ENCODE measurements at regions of chr16 and their contacts with region 1.

Region 1: GRCh38 chr16:10579965-10580882 is at the start of gene EMP2:
- DNase-seq: peak; percentile 75 to 90
- ATAC-seq: peak; percentile 89 to 97
- H3K4me3 ChIP-seq: peak within 1 kb of the TSS; percentile 89
- H3K27ac ChIP-seq: peak within 1 kb of the TSS; percentile 89 to 95
- H3K4me1 ChIP-seq: 0 out of 3 replicates have a peak, but pooled peaks cover 8% of the 10 kb centered on the region
- CTCF ChIP-seq: peak; percentile 67
- EP300 ChIP-seq: no peak
- POLR2A ChIP-seq: peak; percentile 58
- RAD21 ChIP-seq: peak; percentile 34 to 49; a peak in 4 of 5 replicates
- polyA plus RNA-seq, gene EMP2: 21.4 and 26.5 TPM in 2 replicates

Region 2: DNA sequence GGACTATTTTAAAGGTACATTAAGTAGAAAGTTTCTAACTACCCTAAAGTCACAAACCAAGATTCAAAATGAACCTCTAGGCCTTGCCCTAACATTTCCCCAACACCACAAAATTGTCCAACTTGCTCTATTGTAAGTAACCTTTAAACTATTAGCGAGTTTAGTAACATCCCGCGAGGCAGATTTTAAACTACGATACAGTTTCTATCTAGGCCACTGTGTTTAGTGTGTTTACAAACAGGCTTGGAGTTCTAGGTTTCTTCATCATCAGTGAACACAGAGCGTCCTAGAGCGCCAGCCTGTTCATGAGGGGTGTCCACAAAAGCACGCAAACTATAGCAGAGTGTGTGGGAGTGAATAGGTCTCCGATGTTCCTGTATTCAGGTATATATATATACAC is 51.6 kb before region 1 on chr16:
- CTCF ChIA-PET with region 1: no interaction called
- POLR2A ChIA-PET with region 1: no interaction called
- DNase-seq: no peak
- ATAC-seq: no peak
- H3K4me3 ChIP-seq: no peak overlapping the region
- H3K27ac ChIP-seq: no peak overlapping the region
- H3K4me1 ChIP-seq: 0 out of 3 replicates have a peak, but pooled peaks cover 1% of the 10 kb centered on the region
- CTCF ChIP-seq: no peak
- EP300 ChIP-seq: no peak
- POLR2A ChIP-seq: no peak
- RAD21 ChIP-seq: no peak

Region 3: GRCh38 chr16:10566589-10566988 is 13.6 kb before region 1 on chr16:
- CTCF ChIA-PET with region 1: interaction called, 15 read pairs
- POLR2A ChIA-PET with region 1: no interaction called
- DNase-seq: no peak
- ATAC-seq: peak in 1 of 2 experiments; percentile 40; a peak in 1 of 6 replicates
- H3K4me3 ChIP-seq: no peak overlapping the region
- H3K27ac ChIP-seq: no peak overlapping the region
- H3K4me1 ChIP-seq: no peaks in the 10 kb centered on the region
- CTCF ChIP-seq: no peak
- EP300 ChIP-seq: no peak
- POLR2A ChIP-seq: no peak
- RAD21 ChIP-seq: 0 out of 5 replicates have a peak, but pooled peaks of 1 of the 2 experiments have one; percentile 8

Region 4: GRCh38 chr16:10668322-10669045 is 88.3 kb after region 1 on chr16:
- CTCF ChIA-PET with region 1: no interaction called
- POLR2A ChIA-PET with region 1: no interaction called
- DNase-seq: peak; percentile 45 to 54
- ATAC-seq: peak; percentile 90 to 97
- H3K4me3 ChIP-seq: no peak overlapping the region
- H3K27ac ChIP-seq: no peak overlapping the region
- H3K4me1 ChIP-seq: no peaks in the 10 kb centered on the region
- CTCF ChIP-seq: no peak; the same call in 2 of the 3 replicates
- EP300 ChIP-seq: no peak
- POLR2A ChIP-seq: no peak
- RAD21 ChIP-seq: no peak